PC-9 (cell line): ENCODE measurements at regions of chr16 and their contacts with region 1.

Region 1: GRCh38 chr16:495127-495748 is 32.3 kb upstream of the CAPN15 start:
- DNase-seq: peak in 1 of 2 experiments; percentile 47
- H3K4me3 ChIP-seq: no peak overlapping the region
- H3K27ac ChIP-seq: no peak overlapping the region
- H3K4me1 ChIP-seq: no peaks in the 10 kb centered on the region
- H3K27me3 ChIP-seq: no peaks in the 10 kb centered on the region
- CTCF ChIP-seq: peak; percentile 48; the same call in 1 of the 2 replicates

Region 2: DNA sequence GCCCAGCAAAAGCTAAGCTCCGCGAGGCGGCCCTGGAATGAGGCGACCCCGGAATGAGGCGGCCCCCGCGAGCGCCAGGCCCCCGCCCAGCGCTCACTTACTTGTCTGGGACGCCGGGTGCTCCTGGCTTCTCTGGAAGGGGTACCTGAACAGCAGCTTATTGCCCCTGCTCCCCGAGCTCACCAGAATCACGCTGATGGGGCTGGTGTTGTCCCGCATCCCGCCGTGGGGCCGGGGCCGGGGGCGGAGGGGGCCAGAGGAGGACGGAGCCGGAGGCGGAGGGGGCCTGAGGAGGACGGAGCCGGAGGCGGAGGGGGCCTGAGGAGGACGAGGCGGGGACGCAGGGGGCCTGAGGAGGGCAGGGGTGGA is 357.2 kb before region 1 on chr16:
- CTCF ChIA-PET with region 1: no interaction called
- POLR2A ChIA-PET with region 1: interaction called, 13 read pairs
- intact Hi-C with region 1: no loop called
- DNase-seq: peak in 1 of 2 experiments; percentile 28
- H3K4me3 ChIP-seq: peak overlapping the region; percentile 88
- H3K27ac ChIP-seq: peak overlapping the region; percentile 66
- H3K4me1 ChIP-seq: peaks cover 7% of the 10 kb centered on the region; the same call in 1 of the 2 replicates
- H3K27me3 ChIP-seq: no peaks in the 10 kb centered on the region
- CTCF ChIP-seq: no peak

Region 3: DNA sequence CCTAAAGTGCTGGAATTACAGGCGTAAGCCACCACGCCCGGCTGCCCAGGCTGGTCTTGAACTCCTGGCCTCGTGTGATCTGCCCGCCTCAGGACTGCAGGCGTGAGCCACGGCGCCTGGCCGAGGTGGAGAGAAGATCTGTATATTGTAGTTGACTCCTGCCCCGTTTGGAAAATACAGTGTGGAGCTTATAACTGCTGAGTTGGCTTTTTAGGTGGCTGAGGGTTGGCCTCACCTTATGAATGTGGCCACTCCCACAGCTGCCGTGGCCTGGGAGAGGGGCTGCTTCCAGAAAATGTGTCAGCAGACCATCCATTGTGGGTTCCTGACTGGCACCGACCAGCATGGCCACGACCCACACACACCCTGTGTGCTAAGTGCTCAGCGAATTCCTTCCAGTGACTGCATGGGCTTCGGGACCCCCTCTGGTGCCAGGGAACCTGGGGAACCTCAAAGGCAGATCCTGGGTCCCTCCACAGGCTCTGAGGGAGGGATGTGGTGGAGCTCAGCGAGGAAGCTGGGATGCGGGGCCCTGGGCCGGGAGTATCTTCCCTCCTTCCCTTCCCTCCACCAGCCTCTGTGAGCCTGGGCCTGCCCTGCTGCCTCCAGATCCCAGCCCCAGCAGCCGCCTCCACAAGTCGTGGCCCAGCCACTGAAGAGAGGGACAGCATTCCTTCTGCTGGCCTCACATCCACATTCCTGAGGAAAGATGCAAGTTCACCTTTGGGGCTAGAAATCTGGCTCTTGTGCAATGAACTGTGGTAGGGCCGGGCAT is 80.7 kb before region 1 on chr16:
- CTCF ChIA-PET with region 1: interaction called, 3 read pairs
- POLR2A ChIA-PET with region 1: interaction called, 15 read pairs
- intact Hi-C with region 1: no loop called
- DNase-seq: peak; percentile 36 to 65
- H3K4me3 ChIP-seq: no peak overlapping the region
- H3K27ac ChIP-seq: no peak overlapping the region
- H3K4me1 ChIP-seq: no peaks in the 10 kb centered on the region
- H3K27me3 ChIP-seq: no peaks in the 10 kb centered on the region
- CTCF ChIP-seq: no peak

Region 4: GRCh38 chr16:450385-451134 is 44.7 kb before region 1 on chr16:
- CTCF ChIA-PET with region 1: no interaction called
- POLR2A ChIA-PET with region 1: no interaction called
- intact Hi-C with region 1: no loop called
- DNase-seq: peak in 1 of 2 experiments; percentile 42
- H3K4me3 ChIP-seq: no peak overlapping the region
- H3K27ac ChIP-seq: no peak overlapping the region
- H3K4me1 ChIP-seq: no peaks in the 10 kb centered on the region
- H3K27me3 ChIP-seq: no peaks in the 10 kb centered on the region
- CTCF ChIP-seq: no peak

Region 5: GRCh38 chr16:508884-509736 is 13.9 kb after region 1 on chr16:
- CTCF ChIA-PET with region 1: no interaction called
- POLR2A ChIA-PET with region 1: no interaction called
- intact Hi-C with region 1: no loop called
- DNase-seq: no peak
- H3K4me3 ChIP-seq: no peak overlapping the region
- H3K27ac ChIP-seq: no peak overlapping the region
- H3K4me1 ChIP-seq: no peaks in the 10 kb centered on the region
- H3K27me3 ChIP-seq: no peaks in the 10 kb centered on the region
- CTCF ChIP-seq: no peak

Region 6: GRCh38 chr16:626787-627186 is 131.5 kb after region 1 on chr16:
- CTCF ChIA-PET with region 1: no interaction called
- POLR2A ChIA-PET with region 1: no interaction called
- intact Hi-C with region 1: no loop called
- DNase-seq: peak; percentile 87 to 94
- H3K4me3 ChIP-seq: no peak overlapping the region
- H3K27ac ChIP-seq: peak overlapping the region; percentile 76
- H3K4me1 ChIP-seq: peaks cover 24% of the 10 kb centered on the region
- H3K27me3 ChIP-seq: no peaks in the 10 kb centered on the region
- CTCF ChIP-seq: no peak

Region 7: DNA sequence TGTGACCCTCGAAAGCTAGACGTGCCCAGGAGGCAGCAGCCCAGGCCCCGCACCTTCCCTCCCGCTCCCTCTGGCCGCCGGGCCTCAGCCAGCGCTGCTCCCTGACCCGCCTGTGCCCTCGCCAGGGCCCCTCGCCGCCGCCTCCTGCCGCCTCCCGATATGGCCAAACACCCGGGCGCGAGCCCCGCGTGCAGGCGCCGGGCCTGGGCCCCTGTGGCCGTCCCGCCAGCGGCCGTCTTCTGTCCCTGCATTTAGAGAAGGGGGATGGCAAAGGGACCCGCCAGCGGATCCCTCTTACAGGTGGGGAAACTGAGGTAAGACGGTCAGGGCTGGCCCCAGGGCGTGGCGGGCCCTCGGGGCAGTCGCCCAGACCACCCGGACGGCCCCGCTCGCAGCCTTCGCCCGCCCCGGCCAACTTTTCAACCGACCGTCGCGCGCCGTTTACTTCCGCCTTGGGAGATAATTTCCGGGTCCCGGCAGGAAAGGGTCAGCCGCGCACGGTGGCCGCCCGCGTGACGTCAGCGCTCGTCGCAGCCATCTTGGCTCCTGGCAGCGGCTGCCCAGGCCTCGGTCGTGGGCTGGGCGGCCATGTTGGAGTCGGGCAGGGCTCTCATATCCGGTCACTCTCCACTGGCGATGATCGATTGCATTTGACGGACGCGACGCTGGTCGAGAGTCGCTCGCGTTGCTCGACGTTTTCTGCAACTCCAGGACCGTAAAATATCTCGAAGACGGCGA is 312.3 kb after region 1 on chr16:
- CTCF ChIA-PET with region 1: no interaction called
- POLR2A ChIA-PET with region 1: no interaction called
- intact Hi-C with region 1: no loop called
- DNase-seq: peak; percentile 86 to 96
- H3K4me3 ChIP-seq: peak overlapping the region; percentile 97
- H3K27ac ChIP-seq: peak overlapping the region; percentile 76
- H3K4me1 ChIP-seq: 0 out of 2 replicates have a peak, but pooled peaks cover 6% of the 10 kb centered on the region
- H3K27me3 ChIP-seq: peaks cover 4% of the 10 kb centered on the region; the same call in 1 of the 2 replicates
- CTCF ChIP-seq: no peak